GM18951 (cell line): ENCODE measurements at regions of chr1 and their contacts with region 1.

Region 1: GRCh38 chr1:16078925-16079656 is 5.6 kb upstream of the FAM131C start:
- POLR2A ChIP-seq: no peak

Region 2: GRCh38 chr1:16351994-16352841 is 273.1 kb after region 1 on chr1 and contains the start of gene FBXO42:
- in situ Hi-C with region 1: loop called (anchors 25 kb)
- POLR2A ChIP-seq: peak; percentile 93